ENCODE measurements at regions of chr12 and their contacts with region 1.

Region 1: GRCh38 chr12:107607464-107608392 is 77.9 kb upstream of the PWP1 start:
- DNase-seq: peak; percentile 57
- ATAC-seq: peak; percentile 93
- H3K4me3 ChIP-seq: no peak overlapping the region
- H3K27ac ChIP-seq: no peak overlapping the region
- H3K4me1 ChIP-seq: no peaks in the 10 kb centered on the region
- H3K27me3 ChIP-seq: no peaks in the 10 kb centered on the region
- CTCF ChIP-seq: peak; percentile 90 to 93 (median 91)
- POLR2A ChIP-seq: no peak
- RAD21 ChIP-seq: peak; percentile 93

Region 2: DNA sequence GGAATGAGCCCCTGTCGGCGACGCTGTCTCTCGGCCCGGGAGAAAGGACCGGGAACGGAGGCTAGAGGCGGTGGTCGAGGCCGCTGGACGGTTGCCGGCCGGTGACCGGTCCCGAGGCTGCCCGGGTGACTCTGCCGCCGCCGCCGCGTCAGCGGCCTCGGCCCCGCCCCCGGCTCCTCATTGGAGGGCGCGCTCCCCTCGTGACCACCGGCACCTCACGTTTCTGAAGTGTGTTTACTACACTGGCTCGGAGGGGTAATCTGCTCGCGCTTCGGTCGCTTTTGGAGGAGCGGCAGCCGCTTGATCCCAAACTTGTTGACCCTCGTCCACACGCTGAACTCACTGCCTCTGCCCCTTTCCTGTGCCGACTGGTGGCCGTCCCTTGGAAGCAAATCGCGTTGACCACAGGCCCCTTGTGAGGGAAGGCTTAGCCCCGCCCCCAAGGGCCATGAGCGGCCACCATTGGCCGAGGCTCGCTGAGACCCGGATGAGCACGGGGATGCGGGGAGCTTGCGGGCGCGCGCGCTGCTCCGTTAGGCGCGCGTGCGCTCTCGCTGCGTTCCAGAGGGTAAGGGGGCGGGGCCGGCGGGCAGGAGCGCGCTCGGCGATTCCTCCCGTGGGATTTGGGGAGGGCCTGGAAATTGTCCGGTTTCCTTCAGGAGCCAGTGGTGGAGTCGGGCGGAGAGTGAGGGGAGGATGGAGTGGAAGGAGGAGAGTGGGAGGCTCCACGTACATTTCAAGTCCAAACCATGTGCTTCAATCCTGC is 514.1 kb before region 1 on chr12 and contains the start of gene CRY1:
- CTCF ChIA-PET with region 1: interaction called, 4 read pairs
- POLR2A ChIA-PET with region 1: no interaction called
- RAD21 ChIA-PET with region 1: no interaction called
- intact Hi-C with region 1: loop called (anchors 1 kb)
- DNase-seq: peak; percentile 92
- ATAC-seq: peak; percentile 83
- H3K4me3 ChIP-seq: peak within 1 kb of the TSS; percentile 54 to 76
- H3K27ac ChIP-seq: peak within 1 kb of the TSS; percentile 57
- H3K4me1 ChIP-seq: peaks cover 13 to 23% of the 10 kb centered on the region in 2 experiments
- H3K27me3 ChIP-seq: no peaks in the 10 kb centered on the region
- CTCF ChIP-seq: no peak
- POLR2A ChIP-seq: peak; percentile 50
- RAD21 ChIP-seq: no peak
- total RNA-seq, gene CRY1: 16.3 TPM

Region 3: DNA sequence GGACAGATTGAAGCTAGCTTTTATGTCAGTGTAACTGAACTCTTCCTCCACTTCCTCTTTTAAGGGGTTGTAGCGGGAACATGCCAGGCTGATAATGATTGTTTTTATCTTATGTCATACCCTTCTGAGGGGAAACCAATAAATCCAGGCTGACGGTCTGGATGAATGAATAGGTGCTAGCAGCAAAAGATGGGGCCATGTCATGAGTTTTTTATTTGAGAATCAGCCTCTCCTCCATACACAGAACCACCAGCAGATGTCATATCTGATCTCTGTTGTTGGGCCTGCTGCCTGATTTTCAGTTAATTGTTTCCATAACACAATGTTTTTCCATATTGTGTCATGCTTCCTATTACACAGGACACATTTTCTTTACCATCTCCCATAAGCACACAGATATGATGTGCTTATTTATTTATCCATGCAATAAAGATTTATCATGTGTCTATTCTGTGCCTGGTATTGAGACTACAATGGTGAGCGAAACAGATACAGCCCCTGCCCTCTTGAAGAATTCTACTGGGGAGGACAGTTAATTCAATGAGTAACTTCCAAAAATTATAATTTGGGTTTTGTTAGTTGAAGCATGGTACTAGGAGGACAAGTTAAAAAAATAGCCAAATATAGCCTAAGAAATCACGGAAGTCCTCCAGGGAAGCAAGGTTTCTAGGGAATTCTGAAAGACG is 480.8 kb before region 1 on chr12:
- CTCF ChIA-PET with region 1: interaction called, 141 read pairs
- POLR2A ChIA-PET with region 1: no interaction called
- RAD21 ChIA-PET with region 1: interaction called, 4 read pairs
- intact Hi-C with region 1: loop called (anchors 1 kb)
- DNase-seq: peak; percentile 4
- ATAC-seq: peak; percentile 63
- H3K4me3 ChIP-seq: no peak overlapping the region
- H3K27ac ChIP-seq: no peak overlapping the region
- H3K4me1 ChIP-seq: peaks cover 0 to 2% of the 10 kb centered on the region in 2 experiments; a peak in 1 of 4 replicates
- H3K27me3 ChIP-seq: peaks cover 7% of the 10 kb centered on the region; the same call in 1 of the 2 replicates
- CTCF ChIP-seq: peak; percentile 37 to 57 (median 57); a peak in 4 of 6 replicates
- POLR2A ChIP-seq: no peak
- RAD21 ChIP-seq: peak; percentile 70

Region 4: GRCh38 chr12:107131832-107132616 is 475.7 kb before region 1 on chr12:
- CTCF ChIA-PET with region 1: interaction called, 141 read pairs
- POLR2A ChIA-PET with region 1: no interaction called
- RAD21 ChIA-PET with region 1: interaction called, 4 read pairs
- intact Hi-C with region 1: loop called (anchors 1 kb)
- DNase-seq: peak; percentile 44
- ATAC-seq: peak; percentile 78
- H3K4me3 ChIP-seq: no peak overlapping the region
- H3K27ac ChIP-seq: no peak overlapping the region
- H3K4me1 ChIP-seq: peaks cover 0 to 9% of the 10 kb centered on the region in 2 experiments; a peak in 2 of 4 replicates
- H3K27me3 ChIP-seq: no peaks in the 10 kb centered on the region
- CTCF ChIP-seq: peak; percentile 82 to 96 (median 92)
- POLR2A ChIP-seq: no peak
- RAD21 ChIP-seq: peak; percentile 97

Region 5: GRCh38 chr12:107402041-107403022 is 205.4 kb before region 1 on chr12:
- CTCF ChIA-PET with region 1: interaction called, 12 read pairs
- POLR2A ChIA-PET with region 1: no interaction called
- RAD21 ChIA-PET with region 1: no interaction called
- intact Hi-C with region 1: loop called (anchors 1 kb)
- DNase-seq: peak; percentile 69
- ATAC-seq: peak; percentile 76
- H3K4me3 ChIP-seq: no peak overlapping the region
- H3K27ac ChIP-seq: no peak overlapping the region
- H3K4me1 ChIP-seq: peaks cover under 1 to 15% of the 10 kb centered on the region in 2 experiments; a peak in 3 of 4 replicates
- H3K27me3 ChIP-seq: no peaks in the 10 kb centered on the region
- CTCF ChIP-seq: peak; percentile 82 to 89 (median 83)
- POLR2A ChIP-seq: no peak
- RAD21 ChIP-seq: peak; percentile 94

Region 6: GRCh38 chr12:107448198-107448597 is 159.5 kb before region 1 on chr12:
- CTCF ChIA-PET with region 1: interaction called, 9 read pairs
- POLR2A ChIA-PET with region 1: no interaction called
- RAD21 ChIA-PET with region 1: no interaction called
- intact Hi-C with region 1: loop called (anchors 10 kb)
- DNase-seq: peak; percentile 3
- ATAC-seq: peak; percentile 80
- H3K4me3 ChIP-seq: no peak overlapping the region
- H3K27ac ChIP-seq: no peak overlapping the region
- H3K4me1 ChIP-seq: no peaks in the 10 kb centered on the region
- H3K27me3 ChIP-seq: peaks cover 2% of the 10 kb centered on the region; the same call in 1 of the 2 replicates
- CTCF ChIP-seq: peak; percentile 23 to 74 (median 61); a peak in 5 of 6 replicates
- POLR2A ChIP-seq: no peak
- RAD21 ChIP-seq: peak; percentile 33

Region 7: DNA sequence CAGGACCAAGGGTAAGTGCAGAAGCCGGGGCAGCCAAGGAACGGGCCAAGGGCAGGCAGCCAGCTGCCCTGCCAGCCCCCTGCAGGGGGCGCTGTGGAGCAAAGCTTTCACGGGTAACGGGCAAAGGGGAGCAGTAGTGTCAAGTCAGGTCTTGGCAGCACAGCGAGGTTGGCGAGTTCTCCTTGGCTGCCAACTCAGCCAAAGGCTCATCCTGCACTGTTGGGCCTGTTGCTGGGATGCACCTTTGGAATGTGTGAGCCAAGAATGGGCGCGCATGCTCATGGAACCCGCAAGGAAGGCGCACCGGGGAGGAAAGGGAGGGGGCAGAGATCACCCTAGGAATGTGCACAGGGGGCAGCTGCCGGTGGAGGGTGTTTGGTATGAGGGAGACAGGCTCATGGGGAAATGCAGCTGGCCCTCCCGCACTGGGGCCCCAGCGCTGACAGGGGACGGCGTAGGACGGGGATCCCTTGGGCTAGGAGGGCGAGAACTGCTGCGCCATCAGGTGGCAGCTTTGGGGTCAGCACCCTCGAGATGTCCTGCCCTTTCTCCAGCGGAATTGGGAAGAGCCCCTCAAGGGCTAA is 304.8 kb after region 1 on chr12:
- CTCF ChIA-PET with region 1: no interaction called
- POLR2A ChIA-PET with region 1: no interaction called
- RAD21 ChIA-PET with region 1: no interaction called
- intact Hi-C with region 1: no loop called
- DNase-seq: peak; percentile 28
- ATAC-seq: peak; percentile 93
- H3K4me3 ChIP-seq: no peak overlapping the region
- H3K27ac ChIP-seq: no peak overlapping the region
- H3K4me1 ChIP-seq: peaks cover 0 to 2% of the 10 kb centered on the region in 2 experiments; a peak in 1 of 4 replicates
- H3K27me3 ChIP-seq: peaks cover 20% of the 10 kb centered on the region; the same call in 1 of the 2 replicates
- CTCF ChIP-seq: peak; percentile 57 to 96 (median 95); a peak in 5 of 6 replicates
- POLR2A ChIP-seq: no peak
- RAD21 ChIP-seq: peak; percentile 6; the same call in 1 of the 2 replicates